ENCODE measurements at regions of chr12 and their contacts with region 1.

Region 1: DNA sequence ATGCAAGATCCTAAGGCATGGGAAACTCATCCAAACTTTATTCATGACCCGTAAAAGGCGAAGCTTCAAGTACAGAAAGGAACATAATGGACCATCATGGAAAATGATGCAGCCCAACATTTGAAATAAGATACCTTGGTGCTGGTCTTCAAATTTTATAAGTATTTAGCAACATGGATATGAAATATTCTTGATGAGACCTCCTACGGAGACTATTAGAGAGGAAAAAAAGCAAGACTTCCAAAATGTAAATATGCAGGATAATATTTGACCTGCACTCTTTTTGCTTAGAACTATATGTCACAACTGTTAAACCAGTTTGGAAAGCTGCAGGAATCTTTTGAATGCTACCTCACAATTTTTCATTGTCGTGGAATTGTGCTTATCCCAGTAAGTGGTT is 168.8 kb upstream of the ARID2 start:
- DNase-seq: peak; percentile 57
- H3K4me3 ChIP-seq: no peak overlapping the region
- H3K27ac ChIP-seq: peak overlapping the region; percentile 86
- H3K4me1 ChIP-seq: peaks cover 31% of the 10 kb centered on the region
- H3K27me3 ChIP-seq: no peaks in the 10 kb centered on the region
- CTCF ChIP-seq: no peak

Region 2: GRCh38 chr12:45728630-45729232 is 168.0 kb after region 1 on chr12:
- CTCF ChIA-PET with region 1: no interaction called
- POLR2A ChIA-PET with region 1: interaction called, 3 read pairs
- intact Hi-C with region 1: loop called (anchors 5 kb)
- DNase-seq: peak; percentile 99
- H3K4me3 ChIP-seq: peak overlapping the region; percentile 94
- H3K27ac ChIP-seq: peak overlapping the region; percentile 99
- H3K4me1 ChIP-seq: peaks cover 30% of the 10 kb centered on the region
- H3K27me3 ChIP-seq: no peaks in the 10 kb centered on the region
- CTCF ChIP-seq: peak; percentile 86

Measured in A673 (cell line).